ENCODE measurements at regions of chr6 and their contacts with region 1.

Region 1: DNA sequence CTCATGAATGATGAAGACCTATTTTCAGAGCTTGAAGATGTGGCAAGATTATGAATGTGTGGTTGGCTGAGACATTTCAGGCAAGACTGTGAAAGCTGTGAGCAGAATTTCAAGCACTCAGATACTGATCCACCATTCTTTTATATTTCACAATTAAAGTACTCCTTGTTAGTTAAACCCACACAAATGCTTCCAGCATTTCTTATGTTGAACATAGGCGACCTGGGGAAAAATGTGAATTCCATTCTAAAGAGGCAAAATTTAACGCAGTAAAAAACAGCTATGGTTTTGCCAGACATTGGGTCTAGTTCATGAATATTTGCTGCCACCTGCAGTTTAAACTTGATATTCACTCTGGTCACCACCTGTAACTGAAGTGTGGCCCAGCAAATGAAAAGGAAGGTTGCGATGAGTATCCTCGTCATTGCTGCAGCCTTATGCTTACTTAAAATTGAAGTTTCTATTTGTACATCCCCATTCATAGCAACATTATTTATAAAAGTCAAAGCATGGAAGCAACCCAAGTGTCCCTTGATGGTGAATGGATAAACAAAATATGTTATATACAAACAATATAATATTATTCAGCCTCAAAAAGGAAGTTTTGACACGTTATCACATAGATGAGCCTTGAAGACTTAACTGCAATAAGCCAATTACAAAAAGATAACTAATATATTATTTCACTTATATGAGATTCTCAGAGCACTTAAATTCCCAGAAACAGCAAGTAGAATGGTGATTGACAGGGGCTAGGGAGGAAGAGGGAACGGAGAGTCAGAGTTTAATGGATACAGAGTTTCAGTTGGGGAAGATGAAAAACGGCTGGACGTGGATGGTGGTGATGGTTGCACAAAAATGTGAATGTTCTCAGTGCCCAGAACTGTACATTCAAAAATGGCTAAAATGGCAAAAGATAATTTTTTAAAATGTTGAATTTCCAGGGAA is 32.4 kb upstream of the FAM184A start:
- DNase-seq: peak; percentile 31
- H3K4me3 Mint-ChIP-seq: no peak overlapping the region
- H3K27ac Mint-ChIP-seq: no peak overlapping the region
- H3K4me1 Mint-ChIP-seq: peaks cover 17% of the 10 kb centered on the region
- H3K27me3 Mint-ChIP-seq: peaks cover 3% of the 10 kb centered on the region

Region 2: DNA sequence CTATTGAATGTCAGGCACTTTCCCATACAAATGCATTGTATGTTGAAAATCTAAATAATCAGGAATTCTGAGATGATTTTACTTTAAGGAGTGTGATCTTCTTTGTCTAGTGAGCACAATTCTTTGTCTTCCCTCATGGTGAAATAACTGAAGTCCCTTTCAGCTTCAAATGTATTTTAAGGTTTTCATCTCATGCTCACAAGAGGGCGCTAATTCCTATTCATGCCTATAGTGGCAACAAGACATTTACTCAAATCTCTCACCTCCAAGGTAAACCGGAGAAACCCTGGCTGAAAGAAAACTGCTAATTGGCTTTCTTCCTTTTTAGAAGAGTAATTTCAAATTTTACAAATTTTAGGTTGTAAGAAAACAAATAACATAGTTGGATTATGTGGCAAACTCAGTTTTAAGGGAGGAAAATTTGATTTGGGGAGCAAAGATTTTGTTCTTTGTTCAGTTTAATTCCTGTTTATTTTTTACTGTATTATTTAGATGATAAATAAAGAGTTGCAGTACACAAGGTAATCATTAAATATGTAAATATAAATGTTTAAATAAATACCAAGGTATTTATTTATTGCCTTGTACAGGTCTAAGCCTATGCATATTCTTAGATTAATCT is 1134.7 kb before region 1 on chr6:
- intact Hi-C with region 1: loop called (anchors 5 kb)
- DNase-seq: no peak
- H3K4me3 Mint-ChIP-seq: no peak overlapping the region
- H3K27ac Mint-ChIP-seq: no peak overlapping the region
- H3K4me1 Mint-ChIP-seq: no peaks in the 10 kb centered on the region
- H3K27me3 Mint-ChIP-seq: peaks cover 7% of the 10 kb centered on the region

Region 3: GRCh38 chr6:118565311-118565960 is 545.4 kb before region 1 on chr6:
- intact Hi-C with region 1: loop called (anchors 1 kb)
- DNase-seq: no peak
- H3K4me3 Mint-ChIP-seq: no peak overlapping the region
- H3K27ac Mint-ChIP-seq: peak overlapping the region; percentile 9
- H3K4me1 Mint-ChIP-seq: peaks cover 34% of the 10 kb centered on the region
- H3K27me3 Mint-ChIP-seq: no peaks in the 10 kb centered on the region

Region 4: DNA sequence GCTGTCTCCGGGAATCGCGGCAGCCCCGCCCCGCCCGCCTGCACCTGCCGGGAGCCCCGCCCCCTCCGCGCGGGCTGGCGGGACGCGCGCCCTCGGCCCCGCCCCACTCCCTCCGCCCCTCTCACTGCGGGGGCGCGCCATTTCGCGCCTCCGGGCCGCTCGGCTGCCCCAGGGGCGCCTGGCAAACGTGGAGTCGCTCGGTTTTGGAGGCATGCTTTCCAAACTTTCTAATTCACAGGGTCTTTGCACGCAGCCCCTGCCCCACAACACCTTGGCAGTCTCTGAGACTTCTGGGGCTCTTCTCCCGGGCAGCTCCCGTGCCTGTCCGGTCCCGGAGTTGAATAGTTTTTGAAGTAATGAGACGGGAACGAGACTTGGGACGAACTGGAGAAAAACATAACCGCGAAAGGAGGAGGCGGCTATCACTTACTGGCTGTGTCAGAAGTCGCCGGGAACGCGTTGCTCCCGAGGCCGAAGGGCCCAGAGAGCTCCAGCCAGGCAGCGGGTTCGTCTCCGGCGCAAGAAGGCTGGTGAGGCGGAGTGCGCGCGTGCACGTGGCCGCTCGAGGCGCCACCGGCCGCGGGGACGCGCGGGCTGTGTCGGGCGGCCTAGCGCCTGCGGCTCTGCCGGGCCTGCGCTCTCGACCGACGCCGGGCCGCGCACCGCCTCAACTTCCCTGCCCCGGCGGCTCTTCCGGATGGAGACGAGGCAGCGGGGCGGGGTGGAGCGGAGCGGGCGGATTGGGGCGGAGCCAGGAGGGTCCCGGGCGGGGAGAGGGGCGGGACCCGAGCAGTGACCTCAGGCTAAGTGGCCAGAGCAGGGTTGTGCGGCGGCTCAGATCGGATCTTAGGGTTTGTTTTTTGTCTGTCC is 176.2 kb before region 1 on chr6 and contains the start of gene MCM9:
- intact Hi-C with region 1: loop called (anchors 1 kb)
- DNase-seq: peak; percentile 86
- H3K4me3 Mint-ChIP-seq: peak within 1 kb of the TSS; percentile 91
- H3K27ac Mint-ChIP-seq: peak within 1 kb of the TSS; percentile 93
- H3K4me1 Mint-ChIP-seq: peaks cover 40% of the 10 kb centered on the region
- H3K27me3 Mint-ChIP-seq: no peaks in the 10 kb centered on the region
- total RNA-seq, gene MCM9: 19.8 and 24.4 TPM in 2 replicates

Region 5: DNA sequence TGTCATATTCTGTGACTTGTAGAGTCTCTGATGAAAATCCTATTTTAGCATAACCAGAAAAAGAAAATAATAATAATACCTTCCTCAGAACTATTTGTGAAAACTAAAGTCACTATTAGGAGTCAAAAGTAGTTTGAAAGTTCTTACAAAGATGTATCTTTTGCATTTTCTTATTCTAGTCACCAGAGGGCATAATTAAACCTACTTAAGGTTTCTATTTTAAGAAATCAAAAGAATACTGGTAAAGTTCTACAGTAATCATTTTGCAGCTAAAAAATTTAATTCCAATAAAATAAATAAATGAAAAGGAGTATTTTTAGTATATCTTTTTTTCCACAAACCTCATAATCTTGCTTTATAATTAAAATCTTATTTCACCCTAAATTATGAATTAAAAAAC is 147.9 kb before region 1 on chr6:
- intact Hi-C with region 1: loop called (anchors 1 kb)
- DNase-seq: no peak
- H3K4me3 Mint-ChIP-seq: no peak overlapping the region
- H3K27ac Mint-ChIP-seq: no peak overlapping the region
- H3K4me1 Mint-ChIP-seq: peaks cover 18% of the 10 kb centered on the region
- H3K27me3 Mint-ChIP-seq: no peaks in the 10 kb centered on the region

Region 6: DNA sequence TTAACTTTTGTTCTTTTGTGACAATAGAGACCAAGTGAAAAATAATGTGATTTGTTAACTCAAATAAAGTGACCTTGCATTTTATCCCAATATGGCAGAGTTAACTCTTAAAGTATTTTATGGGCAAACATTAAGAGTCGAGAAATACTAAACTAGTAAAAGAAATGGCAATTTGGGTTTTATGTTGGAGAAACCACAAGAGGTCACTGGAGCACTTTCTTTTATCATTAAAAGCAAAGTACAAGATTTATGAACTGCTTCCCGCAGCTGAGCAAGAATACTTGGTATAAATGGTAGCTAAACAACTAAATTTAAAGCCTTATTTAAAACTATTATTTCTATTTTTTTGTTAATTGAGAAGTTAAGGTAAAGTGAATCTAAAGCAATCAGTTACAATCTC is 142.5 kb before region 1 on chr6:
- intact Hi-C with region 1: loop called (anchors 1 kb)
- DNase-seq: no peak
- H3K4me3 Mint-ChIP-seq: no peak overlapping the region
- H3K27ac Mint-ChIP-seq: no peak overlapping the region
- H3K4me1 Mint-ChIP-seq: peaks cover 4% of the 10 kb centered on the region
- H3K27me3 Mint-ChIP-seq: no peaks in the 10 kb centered on the region

Measured in activated T-helper 1 cell treated with anti-CD3 and anti-CD28 coated beads, Interleukin-12 subunit alpha, Interleukin-12 subunit beta, Interleukin-2, Interleukin-4 antibody, amounts not matched to agents 30 ng/mL and 10 ng/mL and 1 ng/mL, durations not matched to agents 14 hours and 24 hours and 36 hours (primary cell).